ENCODE measurements at regions of chr1 and their contacts with region 1.

Region 1: DNA sequence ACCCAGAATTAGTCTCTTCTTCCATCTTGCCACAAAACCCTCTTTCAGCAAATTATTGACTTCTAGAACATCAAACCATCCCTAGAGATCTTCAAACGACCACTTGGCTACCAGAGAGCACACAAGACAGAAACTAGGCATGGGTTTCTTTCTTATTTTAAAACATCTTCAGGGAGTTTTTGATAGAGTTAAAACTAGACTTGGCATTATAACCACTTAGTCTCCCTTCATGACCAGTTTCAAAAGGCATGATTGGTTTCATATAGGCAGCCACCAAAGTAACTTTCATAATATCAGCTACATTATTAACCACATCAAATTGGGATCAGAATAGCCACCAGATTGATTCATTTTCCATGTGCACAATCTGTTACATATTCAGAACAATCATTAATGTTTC is 368.4 kb upstream of the GREM2 start:
- DNase-seq: no peak
- ATAC-seq: no peak
- H3K4me3 Mint-ChIP-seq: no peak overlapping the region
- H3K27ac Mint-ChIP-seq: no peak overlapping the region
- H3K4me1 Mint-ChIP-seq: peaks cover 8% of the 10 kb centered on the region
- H3K27me3 Mint-ChIP-seq: no peaks in the 10 kb centered on the region
- CTCF ChIP-seq: no peak

Region 2: DNA sequence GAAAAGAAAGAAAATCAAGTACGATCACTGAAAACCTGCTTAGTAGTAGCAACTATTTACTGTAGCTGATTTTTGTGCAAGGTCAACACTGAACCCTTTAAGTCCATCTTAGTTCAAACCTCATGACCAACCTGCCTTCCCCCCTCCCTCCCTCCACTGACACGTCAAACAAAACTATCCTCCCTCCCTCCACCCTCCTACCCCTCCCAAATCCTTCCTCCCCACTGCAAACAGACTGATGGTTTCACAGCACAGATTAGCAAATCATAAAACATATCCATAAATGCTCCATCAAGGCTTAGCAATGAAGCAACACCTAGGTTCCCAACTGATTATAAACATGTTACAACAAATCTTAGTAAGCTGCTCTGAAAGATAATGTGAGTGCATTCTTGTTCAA is 204.1 kb before region 1 on chr1:
- CTCF ChIA-PET with region 1: no interaction called
- POLR2A ChIA-PET with region 1: interaction called, 10 read pairs
- DNase-seq: no peak
- ATAC-seq: no peak
- H3K4me3 Mint-ChIP-seq: no peak overlapping the region
- H3K27ac Mint-ChIP-seq: no peak overlapping the region
- H3K4me1 Mint-ChIP-seq: no peaks in the 10 kb centered on the region
- H3K27me3 Mint-ChIP-seq: no peaks in the 10 kb centered on the region
- CTCF ChIP-seq: no peak